Head of caudate nucleus (tissue), 42 donors: ENCODE measurements at regions of chr16 and their contacts with region 1.

Region 1: GRCh38 chr16:84511180-84511824 is 6.8 kb upstream of the MEAK7 start:
- DNase-seq: peak; percentile 58 to 94 (median 85)

Region 2: GRCh38 chr16:84396537-84397008 is 114.7 kb before region 1 on chr16:
- intact Hi-C with region 1: no loop called
- DNase-seq: no peak

Region 3: GRCh38 chr16:84617791-84618580 is 106.7 kb after region 1 on chr16 and contains the start of gene COTL1:
- intact Hi-C with region 1: loop called (anchors 2 kb)
- DNase-seq: peak; percentile 83 to 97 (median 94)

Region 4: GRCh38 chr16:84726079-84726668 is 214.9 kb after region 1 on chr16:
- intact Hi-C with region 1: loop called (anchors 5 kb)
- DNase-seq: peak; percentile 84 to 97 (median 92)

Region 5: DNA sequence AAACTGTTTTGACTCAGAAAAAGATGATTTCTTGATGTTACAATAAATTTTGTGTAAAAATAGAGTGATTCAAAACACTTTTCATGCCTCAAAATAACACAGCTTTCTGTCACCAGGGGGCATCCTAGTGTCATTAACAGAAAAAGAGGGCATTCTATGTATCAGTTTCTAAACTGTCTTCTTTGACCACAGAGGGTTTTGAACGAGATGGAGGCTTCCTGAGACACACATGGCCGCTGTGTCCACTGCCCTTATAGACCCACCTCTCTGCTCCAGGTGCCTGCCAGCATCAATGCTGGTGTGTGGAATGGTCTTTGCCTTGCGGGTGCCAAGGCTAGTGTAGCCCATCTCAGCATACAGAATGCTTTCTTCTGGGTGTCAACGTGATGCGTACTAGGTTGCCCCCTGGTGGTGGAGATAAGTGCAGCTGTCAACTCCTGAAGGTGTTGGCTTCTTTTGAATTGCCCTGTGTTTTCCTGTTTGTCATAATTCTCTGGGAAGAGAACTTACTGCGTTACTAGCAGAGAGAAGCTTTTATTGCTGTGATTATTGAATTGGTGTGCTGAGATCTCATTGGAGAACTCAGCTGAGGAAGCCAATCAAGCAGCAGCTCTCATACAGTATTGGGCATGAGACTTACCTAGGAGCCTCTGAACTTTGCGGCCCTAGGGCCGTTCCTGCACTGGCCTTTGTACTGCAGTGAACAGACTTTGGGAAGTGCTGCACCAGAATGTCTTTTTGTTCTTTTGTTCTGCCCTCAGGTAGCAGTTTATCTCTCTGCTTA is 227.1 kb after region 1 on chr16:
- intact Hi-C with region 1: loop called (anchors 5 kb)
- DNase-seq: peak; percentile 36 to 91 (median 78)

Region 6: DNA sequence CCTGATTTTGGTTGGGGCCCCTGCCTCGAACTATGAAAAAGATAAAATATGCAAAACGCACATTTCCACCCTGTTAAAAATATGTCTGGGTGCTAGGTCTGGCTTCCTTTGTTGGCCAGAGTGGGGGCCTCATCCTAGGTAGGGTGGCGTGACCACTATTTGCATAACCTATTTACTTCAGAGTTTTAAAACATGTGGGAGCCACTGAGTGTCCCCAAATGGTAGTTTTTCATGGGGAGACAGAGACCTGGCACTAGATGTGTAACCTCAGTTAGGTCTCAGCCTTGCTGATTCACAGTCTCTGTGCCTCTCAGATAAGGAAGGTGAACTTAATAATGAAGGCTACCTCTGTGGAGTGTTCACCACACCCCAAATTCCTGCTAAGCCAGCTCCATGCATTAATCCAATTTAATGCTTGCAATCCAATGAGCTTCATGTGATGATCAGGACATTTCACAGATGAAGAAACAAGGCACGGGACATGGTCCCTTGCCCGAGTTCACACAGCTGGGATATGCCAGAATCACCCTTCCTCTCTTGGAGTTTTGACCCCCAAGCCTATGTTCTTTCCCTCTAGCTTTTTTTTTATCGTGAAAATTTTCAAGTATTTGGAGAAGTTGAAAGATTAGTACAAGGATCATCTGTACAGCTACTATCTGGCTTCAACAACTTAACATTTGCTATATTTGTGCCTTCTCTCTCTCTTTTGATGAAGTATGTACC is 1491.0 kb after region 1 on chr16:
- intact Hi-C with region 1: no loop called
- DNase-seq: peak in 2 of 42 donors; percentile 7 to 29